IMR-90 (cell line): ENCODE measurements at regions of chr12 and their contacts with region 1.

Region 1: DNA sequence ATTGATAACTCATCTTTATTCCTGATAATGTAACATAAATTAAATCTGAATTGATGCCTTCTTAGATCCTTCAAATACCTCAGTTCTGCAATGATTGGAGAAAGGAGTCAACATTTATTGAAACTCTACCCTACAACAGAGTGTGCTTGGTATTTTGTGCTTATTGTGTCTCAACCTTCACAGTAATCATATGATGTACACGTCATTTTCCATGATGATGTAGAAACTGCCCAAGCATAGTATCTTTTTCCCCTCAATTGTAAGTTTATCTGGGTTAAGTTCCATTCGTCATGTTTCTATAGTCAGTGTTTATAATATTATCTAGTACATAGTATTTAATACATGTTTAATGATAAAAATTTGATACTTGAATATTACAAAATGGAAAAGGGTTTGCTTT is 736.8 kb downstream of the TMTC2 start:
- DNase-seq: no peak
- ATAC-seq: no peak
- H3K4me3 ChIP-seq: no peak overlapping the region
- H3K27ac ChIP-seq: no peak overlapping the region
- H3K4me1 ChIP-seq: no peaks in the 10 kb centered on the region
- H3K27me3 ChIP-seq: no peaks in the 10 kb centered on the region
- CTCF ChIP-seq: no peak
- POLR2A ChIP-seq: no peak
- RAD21 ChIP-seq: no peak

Region 2: GRCh38 chr12:83365317-83365716 is 58.2 kb before region 1 on chr12:
- CTCF ChIA-PET with region 1: no interaction called
- POLR2A ChIA-PET with region 1: no interaction called
- dilution Hi-C with region 1: no loop called
- in situ Hi-C with region 1: loop called (anchors 10 kb)
- intact Hi-C with region 1: no loop called
- DNase-seq: no peak
- ATAC-seq: no peak
- H3K4me3 ChIP-seq: no peak overlapping the region
- H3K27ac ChIP-seq: no peak overlapping the region
- H3K4me1 ChIP-seq: no peaks in the 10 kb centered on the region
- H3K27me3 ChIP-seq: no peaks in the 10 kb centered on the region
- CTCF ChIP-seq: no peak
- POLR2A ChIP-seq: no peak
- RAD21 ChIP-seq: no peak